ENCODE measurements at regions of chr1 and their contacts with region 1.

Region 1: DNA sequence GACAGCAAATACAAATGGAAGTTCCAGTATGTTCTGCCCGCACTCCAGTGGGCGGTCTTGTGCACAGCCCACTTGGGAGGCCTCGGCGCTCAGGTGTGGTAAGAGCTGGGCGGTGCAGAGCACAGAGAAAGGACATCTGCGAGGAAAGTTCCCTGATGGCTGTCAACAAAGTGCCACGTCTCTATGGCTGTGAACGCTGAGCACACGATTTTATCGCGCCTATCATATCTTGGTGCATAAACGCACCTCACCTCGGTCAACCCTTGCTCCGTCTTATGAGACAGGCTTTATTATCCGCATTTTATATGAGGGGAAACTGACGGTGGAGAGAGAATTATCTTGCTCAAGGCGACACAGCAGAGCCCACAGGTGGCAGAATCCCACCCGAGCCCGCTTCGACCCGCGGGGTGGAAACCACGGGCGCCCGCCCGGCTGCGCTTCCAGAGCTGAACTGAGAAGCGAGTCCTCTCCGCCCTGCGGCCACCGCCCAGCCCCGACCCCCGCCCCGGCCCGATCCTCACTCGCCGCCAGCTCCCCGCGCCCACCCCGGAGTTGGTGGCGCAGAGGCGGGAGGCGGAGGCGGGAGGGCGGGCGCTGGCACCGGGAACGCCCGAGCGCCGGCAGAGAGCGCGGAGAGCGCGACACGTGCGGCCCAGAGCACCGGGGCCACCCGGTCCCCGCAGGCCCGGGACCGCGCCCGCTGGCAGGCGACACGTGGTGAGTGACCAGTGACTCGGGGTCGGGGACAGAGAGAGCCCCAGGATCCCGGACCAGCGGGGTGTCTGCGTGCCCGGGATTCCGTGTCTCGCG is at the start of gene IL12RB2:
- DNase-seq: peak; percentile 20
- ATAC-seq: peak; percentile 65
- H3K4me3 Mint-ChIP-seq: peak within 1 kb of the TSS; percentile 79
- H3K27ac Mint-ChIP-seq: no peak within 1 kb of the TSS
- H3K4me1 Mint-ChIP-seq: peaks cover 11% of the 10 kb centered on the region
- H3K27me3 Mint-ChIP-seq: peaks cover 35% of the 10 kb centered on the region
- CTCF ChIP-seq: no peak
- total RNA-seq, gene IL12RB2: 0.98 and 1.1 TPM in 2 replicates

Region 2: DNA sequence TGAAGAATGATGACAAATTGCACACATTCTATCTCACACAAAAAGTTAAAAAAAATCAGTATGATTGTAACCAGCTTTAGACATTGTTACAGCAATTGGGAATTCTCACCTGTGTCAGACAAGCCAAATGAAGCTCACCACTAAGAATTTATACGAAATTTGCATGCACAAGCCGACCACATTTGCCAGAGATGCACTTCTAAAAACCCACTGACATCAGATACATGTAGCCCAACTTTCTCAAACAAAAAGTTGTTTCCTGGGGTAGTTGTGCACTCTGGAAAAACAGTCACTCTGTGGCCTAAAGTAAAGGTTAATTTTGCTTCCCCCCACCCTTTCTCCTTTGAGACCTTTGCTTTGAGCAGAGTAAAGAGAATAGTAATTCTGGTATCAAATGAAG is 67.7 kb before region 1 on chr1:
- CTCF ChIA-PET with region 1: no interaction called
- POLR2A ChIA-PET with region 1: no interaction called
- intact Hi-C with region 1: no loop called
- DNase-seq: no peak
- ATAC-seq: no peak
- H3K4me3 Mint-ChIP-seq: no peak overlapping the region
- H3K27ac Mint-ChIP-seq: no peak overlapping the region
- H3K4me1 Mint-ChIP-seq: no peaks in the 10 kb centered on the region
- H3K27me3 Mint-ChIP-seq: peaks cover 4% of the 10 kb centered on the region
- CTCF ChIP-seq: no peak

Region 3: GRCh38 chr1:67407498-67407897 is 100.0 kb after region 1 on chr1:
- CTCF ChIA-PET with region 1: no interaction called
- POLR2A ChIA-PET with region 1: no interaction called
- intact Hi-C with region 1: loop called (anchors 5 kb)
- DNase-seq: no peak
- ATAC-seq: no peak
- H3K4me3 Mint-ChIP-seq: no peak overlapping the region
- H3K27ac Mint-ChIP-seq: no peak overlapping the region
- H3K4me1 Mint-ChIP-seq: no peaks in the 10 kb centered on the region
- H3K27me3 Mint-ChIP-seq: no peaks in the 10 kb centered on the region
- CTCF ChIP-seq: no peak

Region 4: GRCh38 chr1:67460676-67461500 is 153.4 kb after region 1 on chr1:
- CTCF ChIA-PET with region 1: no interaction called
- POLR2A ChIA-PET with region 1: no interaction called
- intact Hi-C with region 1: no loop called
- DNase-seq: no peak
- ATAC-seq: no peak
- H3K4me3 Mint-ChIP-seq: no peak overlapping the region
- H3K27ac Mint-ChIP-seq: no peak overlapping the region
- H3K4me1 Mint-ChIP-seq: no peaks in the 10 kb centered on the region
- H3K27me3 Mint-ChIP-seq: peaks cover 4% of the 10 kb centered on the region
- CTCF ChIP-seq: no peak

Region 5: DNA sequence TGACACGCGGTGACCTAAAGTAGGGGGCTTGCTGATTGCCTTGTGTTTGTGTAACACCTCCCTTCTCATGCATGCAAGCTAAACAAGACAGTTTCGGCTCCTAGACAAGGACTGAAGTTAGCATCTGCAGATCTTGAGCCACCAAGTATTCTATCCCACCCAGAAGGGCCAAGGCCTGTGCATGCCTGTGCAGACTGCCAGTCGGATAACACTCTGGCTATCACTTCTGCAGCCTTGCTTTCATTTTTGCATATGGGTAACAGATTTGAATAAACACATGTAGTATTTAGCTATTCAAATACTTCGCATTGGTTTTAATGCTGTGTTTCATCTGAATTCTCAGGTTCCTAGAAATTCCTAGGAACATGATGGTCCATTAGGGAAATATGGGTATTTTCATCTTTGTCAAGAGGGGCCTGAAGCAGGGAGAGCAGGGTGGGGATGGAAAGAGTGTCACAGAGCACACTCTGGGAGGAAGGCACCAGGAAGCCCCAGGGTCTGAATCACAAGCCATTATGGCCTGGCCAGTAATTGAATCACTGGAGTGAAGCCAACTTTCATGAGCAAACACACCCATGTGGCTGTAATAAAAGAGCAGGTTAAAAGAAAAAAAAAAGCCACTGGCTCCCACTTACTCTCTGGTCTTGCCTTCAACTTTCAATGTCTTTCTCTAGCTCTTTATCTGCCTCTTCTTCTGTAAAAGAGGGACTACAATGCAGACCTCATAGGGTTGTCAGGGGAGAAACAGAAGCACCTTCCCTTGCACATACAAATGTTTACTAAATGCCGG is 405.8 kb after region 1 on chr1:
- CTCF ChIA-PET with region 1: no interaction called
- POLR2A ChIA-PET with region 1: no interaction called
- intact Hi-C with region 1: no loop called
- DNase-seq: no peak
- ATAC-seq: no peak
- H3K4me3 Mint-ChIP-seq: no peak overlapping the region
- H3K27ac Mint-ChIP-seq: no peak overlapping the region
- H3K4me1 Mint-ChIP-seq: peaks cover 4% of the 10 kb centered on the region
- H3K27me3 Mint-ChIP-seq: no peaks in the 10 kb centered on the region
- CTCF ChIP-seq: no peak